ENCODE measurements at regions of chr11 and their contacts with region 1.

Region 1: DNA sequence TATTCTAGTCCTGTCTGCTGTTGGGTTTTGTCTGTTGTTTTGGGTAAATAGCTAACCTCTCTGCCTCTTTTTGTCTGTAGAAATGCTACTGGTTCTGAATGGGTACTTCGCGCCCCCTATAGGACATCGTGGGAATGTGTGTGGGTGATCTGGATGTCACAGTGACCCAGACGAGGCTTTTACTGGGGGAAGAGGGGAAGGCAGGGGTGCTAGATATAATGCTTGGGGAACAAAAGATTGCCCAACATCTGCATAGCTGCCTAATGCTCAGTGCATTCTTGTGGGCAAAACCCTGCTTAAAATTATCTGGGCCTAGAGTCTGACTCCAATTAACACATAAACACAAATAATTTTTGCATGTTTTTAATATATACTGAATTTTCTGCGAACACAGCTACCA is 57.7 kb downstream of the BMAL1 start:
- DNase-seq: peak; percentile 42
- H3K4me3 ChIP-seq: no peak overlapping the region
- H3K27ac ChIP-seq: no peak overlapping the region
- H3K4me1 ChIP-seq: peaks cover 96% of the 10 kb centered on the region
- H3K27me3 ChIP-seq: no peaks in the 10 kb centered on the region
- CTCF ChIP-seq: peak; percentile 87

Region 2: DNA sequence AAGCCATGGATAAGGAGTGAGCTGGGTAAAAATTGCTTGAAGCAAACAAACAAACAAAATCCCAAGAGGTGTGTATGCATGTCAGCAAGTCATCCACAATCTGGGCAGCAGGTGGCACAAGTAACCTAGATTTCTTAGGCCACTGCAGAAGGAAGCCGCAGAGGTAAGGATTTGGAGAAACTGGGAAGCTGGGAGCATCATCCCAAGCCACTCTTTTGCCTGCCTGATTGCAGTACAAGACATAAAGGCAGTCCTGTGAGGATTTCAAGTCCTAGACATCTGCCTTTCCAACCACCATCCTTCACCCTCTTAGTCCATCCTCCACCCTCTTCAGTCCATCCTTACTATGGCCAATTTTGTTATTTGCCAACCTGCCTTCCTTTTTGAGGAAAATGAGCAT is 124.9 kb before region 1 on chr11:
- intact Hi-C with region 1: loop called (anchors 2 kb)
- DNase-seq: peak; percentile 42
- H3K4me3 ChIP-seq: no peak overlapping the region
- H3K27ac ChIP-seq: no peak overlapping the region
- H3K4me1 ChIP-seq: peaks cover 13% of the 10 kb centered on the region
- H3K27me3 ChIP-seq: peaks cover 11% of the 10 kb centered on the region
- CTCF ChIP-seq: peak; percentile 72

Region 3: GRCh38 chr11:13289081-13289480 is 46.2 kb before region 1 on chr11:
- intact Hi-C with region 1: no loop called
- DNase-seq: no peak
- H3K4me3 ChIP-seq: no peak overlapping the region
- H3K27ac ChIP-seq: no peak overlapping the region
- H3K4me1 ChIP-seq: peaks cover 38% of the 10 kb centered on the region
- H3K27me3 ChIP-seq: no peaks in the 10 kb centered on the region
- CTCF ChIP-seq: no peak

Region 4: GRCh38 chr11:14443638-14444037 is 1108.3 kb after region 1 on chr11:
- intact Hi-C with region 1: no loop called
- DNase-seq: no peak
- H3K4me3 ChIP-seq: no peak overlapping the region
- H3K27ac ChIP-seq: no peak overlapping the region
- H3K4me1 ChIP-seq: peaks cover 8% of the 10 kb centered on the region
- H3K27me3 ChIP-seq: no peaks in the 10 kb centered on the region
- CTCF ChIP-seq: no peak